ENCODE measurements at regions of chr17 and their contacts with region 1.

Region 1: GRCh38 chr17:8884336-8884990 is 17.0 kb upstream of the PIK3R6 start:
- DNase-seq: no peak
- ATAC-seq: no peak

Region 2: DNA sequence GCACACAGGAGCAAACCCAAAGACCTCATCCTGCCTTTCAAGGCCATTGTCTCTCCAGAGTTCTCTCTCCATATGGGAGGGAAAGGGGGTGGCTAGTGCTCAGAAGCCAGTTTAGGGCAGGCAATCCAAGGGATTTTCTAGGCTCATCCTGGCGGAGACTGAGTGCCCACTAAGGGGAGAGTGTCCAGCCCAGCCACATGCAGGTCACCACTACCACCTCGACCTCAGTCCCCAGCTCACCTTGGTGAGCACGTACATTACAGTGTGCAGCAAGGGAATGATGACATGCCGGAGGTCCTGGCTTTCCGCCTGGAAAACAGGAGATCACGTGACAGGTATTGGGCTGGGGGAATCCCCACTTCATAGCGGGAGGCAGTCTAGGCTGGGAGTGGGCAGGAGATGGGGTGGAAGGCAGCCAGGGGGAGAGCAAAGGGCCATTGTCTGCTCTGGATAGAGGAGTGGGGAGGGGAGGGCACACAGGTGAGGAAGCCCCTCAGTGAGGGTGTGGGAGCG is 46.8 kb before region 1 on chr17:
- intact Hi-C with region 1: loop called in 1 of 2 experiments (anchors 5 kb)
- DNase-seq: no peak
- ATAC-seq: peak in 1 of 2 donors; percentile 31

Region 3: GRCh38 chr17:8900626-8901585 is 16.4 kb after region 1 on chr17:
- intact Hi-C with region 1: loop called in 1 of 2 experiments (anchors 2 kb)
- DNase-seq: no peak
- ATAC-seq: no peak

Measured in left cardiac atrium (tissue), 4 donors.